ENCODE measurements at regions of chr11 and their contacts with region 1.

Region 1: GRCh38 chr11:130145975-130146776 is 13.4 kb upstream of the ST14 start:
- DNase-seq: peak; percentile 85 to 87
- H3K4me3 ChIP-seq: peak overlapping the region in 1 of 4 experiments; percentile 26; a peak in 1 of 8 replicates
- H3K27ac ChIP-seq: peak overlapping the region; percentile 41; the same call in 1 of the 2 replicates
- H3K4me1 ChIP-seq: peaks cover 0 to 15% (median 7%) of the 10 kb centered on the region in 4 experiments; a peak in 5 of 7 replicates
- H3K27me3 ChIP-seq: no peaks in the 10 kb centered on the region
- CTCF ChIP-seq: peak; percentile 42 to 72 (median 51)
- EP300 ChIP-seq: peak in 1 of 2 experiments; percentile 80; a peak in 1 of 3 replicates
- POLR2A ChIP-seq: peak in 1 of 2 experiments; percentile 56; a peak in 1 of 3 replicates
- RAD21 ChIP-seq: peak; percentile 50 to 56

Region 2: DNA sequence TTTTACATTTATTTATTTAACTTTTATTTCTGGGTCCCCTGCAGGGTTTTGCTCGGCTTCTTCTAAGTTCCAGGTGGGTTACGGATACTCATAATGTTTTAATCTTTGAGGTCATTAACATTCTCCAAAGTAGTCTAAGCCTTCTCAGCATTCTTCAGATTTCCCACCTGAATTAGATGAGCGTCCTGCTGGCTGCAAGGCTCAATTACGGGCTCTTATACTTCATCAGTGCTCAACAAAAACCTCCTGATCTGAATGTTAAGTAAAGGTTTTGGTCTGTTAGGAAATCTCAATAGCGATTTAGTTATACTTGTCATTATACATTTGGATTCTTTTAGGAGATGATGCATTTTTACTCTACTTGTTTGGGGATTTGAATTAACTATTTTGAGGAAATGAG is 223.5 kb before region 1 on chr11:
- CTCF ChIA-PET with region 1: interaction called, 19 read pairs
- POLR2A ChIA-PET with region 1: no interaction called
- DNase-seq: no peak
- H3K4me3 ChIP-seq: no peak overlapping the region
- H3K27ac ChIP-seq: no peak overlapping the region
- H3K4me1 ChIP-seq: peaks cover 0 to 4% (median 2%) of the 10 kb centered on the region in 4 experiments; a peak in 2 of 7 replicates
- H3K27me3 ChIP-seq: no peaks in the 10 kb centered on the region
- CTCF ChIP-seq: no peak
- EP300 ChIP-seq: no peak
- POLR2A ChIP-seq: no peak
- RAD21 ChIP-seq: no peak

Region 3: DNA sequence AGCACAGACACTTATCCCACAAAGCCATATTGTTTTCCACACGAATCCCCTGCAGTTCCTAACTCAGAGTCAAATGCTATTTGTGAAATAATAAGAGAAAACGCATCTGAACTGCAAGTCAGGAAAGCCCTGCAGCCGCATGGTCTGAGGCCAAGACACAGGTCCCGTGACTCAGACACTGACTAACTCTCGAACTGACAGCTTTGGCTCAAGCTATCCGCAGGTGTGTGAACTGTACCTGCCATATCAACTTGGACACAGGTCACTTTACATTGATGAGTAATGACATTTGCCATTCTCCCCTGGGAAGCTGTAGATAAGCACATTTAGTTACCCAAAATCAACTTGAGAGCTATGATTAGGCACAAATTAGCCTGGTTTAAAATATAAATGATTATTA is 215.9 kb before region 1 on chr11:
- CTCF ChIA-PET with region 1: interaction called, 19 read pairs
- POLR2A ChIA-PET with region 1: no interaction called
- DNase-seq: no peak
- H3K4me3 ChIP-seq: no peak overlapping the region
- H3K27ac ChIP-seq: no peak overlapping the region
- H3K4me1 ChIP-seq: peaks cover 0 to 4% (median 2%) of the 10 kb centered on the region in 4 experiments; a peak in 4 of 7 replicates
- H3K27me3 ChIP-seq: no peaks in the 10 kb centered on the region
- CTCF ChIP-seq: no peak
- EP300 ChIP-seq: no peak
- POLR2A ChIP-seq: no peak
- RAD21 ChIP-seq: no peak

Region 4: DNA sequence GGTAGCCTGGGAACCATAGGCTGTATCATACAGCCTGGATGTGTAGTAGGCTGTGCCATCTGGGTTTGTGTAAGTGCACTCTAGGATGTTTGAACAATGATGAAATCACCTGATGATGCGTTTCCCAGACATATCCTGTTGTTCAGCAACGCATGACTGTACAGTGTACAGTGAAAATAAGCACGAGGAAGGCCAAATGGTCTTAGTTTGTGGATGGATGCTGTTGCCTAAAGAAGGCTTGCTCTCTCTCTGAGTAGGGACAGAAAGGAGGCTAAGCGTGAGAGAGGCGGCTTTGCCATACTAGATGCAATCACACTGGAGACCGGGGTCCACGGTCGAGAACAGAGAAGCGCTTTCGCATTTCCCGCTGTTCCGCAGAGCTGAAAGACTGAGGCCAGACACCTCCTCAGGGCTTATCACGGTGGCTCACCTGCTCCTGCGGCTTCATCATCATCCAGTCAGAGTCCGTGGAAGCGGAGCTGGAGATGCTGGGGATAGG is 104.0 kb before region 1 on chr11:
- CTCF ChIA-PET with region 1: no interaction called
- POLR2A ChIA-PET with region 1: no interaction called
- DNase-seq: no peak
- H3K4me3 ChIP-seq: no peak overlapping the region
- H3K27ac ChIP-seq: no peak overlapping the region
- H3K4me1 ChIP-seq: peaks cover 0 to 3% (median 1%) of the 10 kb centered on the region in 4 experiments; a peak in 2 of 7 replicates
- H3K27me3 ChIP-seq: no peaks in the 10 kb centered on the region
- CTCF ChIP-seq: no peak
- EP300 ChIP-seq: no peak
- POLR2A ChIP-seq: no peak
- RAD21 ChIP-seq: no peak

Region 5: DNA sequence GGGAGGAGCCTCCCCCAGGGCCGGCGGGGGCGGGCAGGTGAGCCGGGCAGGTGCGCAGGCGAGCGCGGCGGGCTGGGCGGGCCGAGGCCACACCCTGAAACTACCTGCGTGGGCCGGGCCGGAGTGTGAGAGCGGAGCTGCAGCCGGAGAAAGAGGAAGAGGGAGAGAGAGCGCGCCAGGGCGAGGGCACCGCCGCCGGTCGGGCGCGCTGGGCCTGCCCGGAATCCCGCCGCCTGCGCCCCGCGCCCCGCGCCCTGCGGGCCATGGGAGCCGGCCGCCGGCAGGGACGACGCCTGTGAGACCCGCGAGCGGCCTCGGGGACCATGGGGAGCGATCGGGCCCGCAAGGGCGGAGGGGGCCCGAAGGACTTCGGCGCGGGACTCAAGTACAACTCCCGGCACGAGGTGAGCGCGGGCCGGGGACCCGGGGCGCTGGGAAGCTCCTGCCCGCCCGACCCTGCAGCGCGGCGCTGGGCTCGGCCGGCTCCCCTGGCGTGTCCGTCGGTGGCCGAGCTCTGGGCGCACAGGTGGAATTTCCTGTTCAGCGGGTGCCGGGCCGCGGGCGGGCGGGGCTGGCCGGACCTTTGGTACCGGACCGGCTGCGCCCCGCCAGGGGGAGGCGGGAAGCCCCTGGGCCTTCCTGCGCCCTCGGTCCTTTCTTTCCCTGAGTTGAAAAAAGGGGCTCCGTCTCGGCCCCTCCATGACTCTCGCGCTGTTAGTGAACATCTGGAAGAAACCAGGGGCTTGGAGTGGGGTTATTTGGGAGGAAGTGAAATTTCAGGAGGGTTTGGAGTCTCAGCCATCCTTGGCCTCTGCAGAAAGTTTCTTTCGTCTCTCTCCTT is 13.7 kb after region 1 on chr11 and contains the start of gene ST14:
- CTCF ChIA-PET with region 1: interaction called, 20 read pairs
- POLR2A ChIA-PET with region 1: interaction called, 17 read pairs
- DNase-seq: peak in 1 of 2 experiments; percentile 72
- H3K4me3 ChIP-seq: peak within 1 kb of the TSS; percentile 37 to 61 (median 44)
- H3K27ac ChIP-seq: no peak within 1 kb of the TSS
- H3K4me1 ChIP-seq: peaks cover 0 to 25% (median 11%) of the 10 kb centered on the region in 4 experiments; a peak in 6 of 7 replicates
- H3K27me3 ChIP-seq: peaks cover 4 to 51% (median 43%) of the 10 kb centered on the region in 4 experiments
- CTCF ChIP-seq: no peak
- EP300 ChIP-seq: no peak
- POLR2A ChIP-seq: no peak
- RAD21 ChIP-seq: no peak
- total RNA-seq, gene ST14: 22.4 and 25.7 TPM in 2 replicates